ENCODE measurements at regions of chr14 and their contacts with region 1.

Region 1: DNA sequence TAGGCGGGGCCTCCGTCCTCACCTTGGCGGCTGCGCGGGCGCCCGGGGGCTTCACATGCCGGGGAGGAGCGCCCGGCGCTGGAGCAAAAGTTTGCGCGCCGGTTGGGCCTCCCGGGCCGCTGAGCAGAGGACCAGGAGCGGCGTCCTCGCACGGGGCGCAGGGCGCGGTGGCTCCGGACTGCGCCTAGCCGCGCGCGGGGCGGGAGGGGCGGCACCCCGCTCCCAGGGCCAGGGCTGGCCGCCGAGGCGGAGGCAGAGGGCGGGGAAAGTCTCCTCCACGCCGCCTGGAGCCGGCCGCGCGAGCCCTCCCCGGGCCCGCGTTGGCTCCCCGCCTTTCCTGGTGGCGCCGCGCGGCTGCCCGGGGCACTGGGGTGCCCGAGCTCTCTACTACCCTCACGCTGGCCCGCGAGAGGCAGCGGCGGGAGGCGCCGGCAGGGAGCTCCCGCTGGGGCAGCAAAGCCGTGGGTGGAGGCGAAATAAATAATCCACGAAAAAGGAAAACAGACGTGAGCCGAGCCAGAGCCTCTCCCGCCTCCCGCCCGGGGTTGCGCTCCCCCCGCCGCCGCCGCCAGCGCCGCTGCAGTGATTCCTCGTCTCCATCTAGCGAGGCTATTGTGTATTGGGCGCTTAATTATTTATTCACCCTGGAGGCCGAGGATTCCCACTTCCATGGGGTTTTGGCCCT is 400 bp upstream of the PRIMA1 start:
- DNase-seq: peak; percentile 75
- ATAC-seq: peak; percentile 93

Region 2: GRCh38 chr14:93655078-93655750 is 133.5 kb before region 1 on chr14:
- intact Hi-C with region 1: loop called (anchors 1 kb)
- DNase-seq: no peak
- ATAC-seq: no peak

Region 3: DNA sequence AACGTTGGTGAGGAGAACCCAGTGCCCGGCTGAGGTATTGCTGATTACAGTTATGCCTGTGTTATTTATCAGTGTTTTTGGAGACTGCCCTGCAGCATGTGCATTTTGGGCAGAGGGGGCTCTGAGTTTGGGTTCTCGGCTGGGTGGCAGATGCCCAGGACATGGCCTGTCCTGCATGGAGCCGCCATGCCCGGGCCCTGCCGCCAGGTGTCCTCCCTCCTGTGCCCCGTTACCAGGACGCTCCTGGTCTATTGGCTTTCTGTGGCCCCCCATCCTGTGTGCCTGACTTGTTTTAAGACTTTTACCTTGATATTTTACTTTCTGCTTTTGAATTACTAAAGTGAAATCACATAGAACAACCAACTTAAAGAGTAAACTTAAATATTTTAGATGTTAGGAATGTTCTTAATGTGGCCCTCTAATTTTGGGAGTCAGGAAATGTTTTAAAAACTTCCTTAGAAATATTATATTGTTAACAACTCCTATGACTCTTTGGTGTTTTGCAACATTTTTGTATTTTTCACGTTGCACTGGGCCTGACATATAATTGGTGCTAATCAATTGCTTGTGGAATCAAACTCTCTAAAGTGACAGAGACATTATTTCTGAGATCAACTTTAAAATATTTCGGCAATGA is 52.2 kb before region 1 on chr14:
- intact Hi-C with region 1: loop called (anchors 1 kb)
- DNase-seq: peak; percentile 28
- ATAC-seq: no peak

Measured in Right ventricle myocardium inferior (tissue), 1 donor.